Prostate gland (tissue), 2 donors: ENCODE measurements at regions of chr4 and their contacts with region 1.

Region 1: DNA sequence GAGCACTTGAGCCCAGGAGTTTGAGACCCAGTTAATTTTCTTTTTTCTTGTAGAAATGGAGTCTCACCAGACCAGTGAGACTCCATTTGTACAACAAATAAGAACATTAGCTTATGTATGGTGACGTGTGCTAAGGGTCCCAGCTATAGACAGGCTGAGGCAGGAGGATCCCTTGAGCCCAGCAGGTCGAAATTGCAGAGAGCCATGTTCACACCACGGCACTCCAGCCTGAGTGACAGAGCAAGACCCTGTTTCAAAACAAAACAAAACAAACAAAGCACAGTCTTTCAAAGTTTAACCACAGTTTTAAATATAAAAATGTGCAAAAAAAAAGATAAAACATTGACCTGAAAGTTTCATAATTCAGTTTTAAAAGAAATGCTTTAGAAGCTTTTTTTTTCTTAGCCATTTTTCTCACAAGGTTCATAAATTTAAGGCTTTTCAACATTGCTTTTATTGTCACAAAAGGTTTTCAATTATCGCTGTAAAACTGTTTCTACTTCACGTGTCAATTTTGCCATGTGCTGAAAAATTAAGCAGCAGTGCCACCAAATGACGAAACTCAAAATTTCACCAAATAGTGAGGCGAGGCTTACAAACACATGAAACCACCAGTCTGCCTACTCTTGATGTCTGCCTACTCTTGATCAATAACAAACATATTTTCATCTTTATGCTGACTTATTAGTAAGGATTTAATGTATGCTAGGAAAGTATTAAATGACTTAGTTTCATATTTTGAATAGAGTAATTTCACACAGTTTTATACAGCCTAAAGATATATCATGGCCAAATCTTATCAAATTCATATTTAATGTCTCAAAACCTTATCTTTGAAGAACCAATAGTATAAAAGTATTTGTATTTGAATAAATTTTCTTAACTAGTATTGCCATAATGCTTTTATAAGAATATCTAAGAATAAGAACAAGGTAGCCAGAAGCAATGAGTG is 126.3 kb downstream of the NEK1 start:
- DNase-seq: peak; percentile 36
- H3K4me3 ChIP-seq: no peak overlapping the region
- H3K27ac ChIP-seq: no peak overlapping the region
- H3K4me1 ChIP-seq: no peaks in the 10 kb centered on the region
- H3K27me3 ChIP-seq: no peaks in the 10 kb centered on the region
- CTCF ChIP-seq: peak in 3 of 4 experiments; percentile 43 to 71 (median 66)
- POLR2A ChIP-seq: no peak

Region 2: GRCh38 chr4:168514249-168514852 is 971.7 kb before region 1 on chr4:
- intact Hi-C with region 1: loop called (anchors 10 kb)
- DNase-seq: no peak
- H3K4me3 ChIP-seq: no peak overlapping the region
- H3K27ac ChIP-seq: no peak overlapping the region
- H3K4me1 ChIP-seq: no peaks in the 10 kb centered on the region
- H3K27me3 ChIP-seq: no peaks in the 10 kb centered on the region
- CTCF ChIP-seq: peak; percentile 30 to 48 (median 44)
- POLR2A ChIP-seq: no peak

Region 3: DNA sequence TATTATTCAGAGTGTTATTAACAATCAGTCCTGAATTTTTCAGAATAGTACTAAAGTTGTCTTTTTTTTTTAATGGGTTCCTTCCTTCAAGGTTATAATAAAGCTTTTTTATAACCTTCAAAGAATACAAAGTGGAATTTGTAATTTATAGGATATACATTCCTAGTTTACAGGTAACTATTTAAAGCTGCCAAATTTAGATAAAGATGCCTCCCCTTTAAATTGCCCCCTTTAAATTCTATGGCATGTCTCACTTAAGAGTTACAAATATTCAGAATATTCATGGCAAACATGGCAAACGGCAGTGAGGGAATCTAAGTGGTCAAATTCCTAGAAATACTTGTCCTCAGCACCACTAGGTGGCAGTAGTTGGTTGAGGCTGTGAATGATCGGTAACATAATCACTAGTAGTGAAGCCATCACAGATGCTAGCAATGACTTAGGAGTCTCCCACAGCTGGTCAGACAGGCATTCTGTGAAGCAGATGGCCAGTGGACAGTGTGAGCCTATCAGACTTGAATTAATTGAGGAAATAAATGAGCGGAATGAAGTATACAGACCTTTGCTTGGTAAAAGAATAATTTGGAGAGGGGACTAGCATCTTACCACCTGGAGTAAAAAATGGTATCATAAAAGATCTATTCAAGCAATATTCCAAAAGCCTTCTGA is 562.4 kb before region 1 on chr4:
- intact Hi-C with region 1: loop called (anchors 5 kb)
- DNase-seq: peak; percentile 55
- H3K4me3 ChIP-seq: no peak overlapping the region
- H3K27ac ChIP-seq: no peak overlapping the region
- H3K4me1 ChIP-seq: no peaks in the 10 kb centered on the region
- H3K27me3 ChIP-seq: no peaks in the 10 kb centered on the region
- CTCF ChIP-seq: peak; percentile 45 to 80 (median 72)
- POLR2A ChIP-seq: no peak

Region 4: GRCh38 chr4:169024762-169025161 is 461.3 kb before region 1 on chr4:
- intact Hi-C with region 1: loop called (anchors 5 kb)
- DNase-seq: peak; percentile 26
- H3K4me3 ChIP-seq: no peak overlapping the region
- H3K27ac ChIP-seq: no peak overlapping the region
- H3K4me1 ChIP-seq: no peaks in the 10 kb centered on the region
- H3K27me3 ChIP-seq: no peaks in the 10 kb centered on the region
- CTCF ChIP-seq: peak in 3 of 4 experiments; percentile 54 to 72 (median 71)
- POLR2A ChIP-seq: no peak

Region 5: DNA sequence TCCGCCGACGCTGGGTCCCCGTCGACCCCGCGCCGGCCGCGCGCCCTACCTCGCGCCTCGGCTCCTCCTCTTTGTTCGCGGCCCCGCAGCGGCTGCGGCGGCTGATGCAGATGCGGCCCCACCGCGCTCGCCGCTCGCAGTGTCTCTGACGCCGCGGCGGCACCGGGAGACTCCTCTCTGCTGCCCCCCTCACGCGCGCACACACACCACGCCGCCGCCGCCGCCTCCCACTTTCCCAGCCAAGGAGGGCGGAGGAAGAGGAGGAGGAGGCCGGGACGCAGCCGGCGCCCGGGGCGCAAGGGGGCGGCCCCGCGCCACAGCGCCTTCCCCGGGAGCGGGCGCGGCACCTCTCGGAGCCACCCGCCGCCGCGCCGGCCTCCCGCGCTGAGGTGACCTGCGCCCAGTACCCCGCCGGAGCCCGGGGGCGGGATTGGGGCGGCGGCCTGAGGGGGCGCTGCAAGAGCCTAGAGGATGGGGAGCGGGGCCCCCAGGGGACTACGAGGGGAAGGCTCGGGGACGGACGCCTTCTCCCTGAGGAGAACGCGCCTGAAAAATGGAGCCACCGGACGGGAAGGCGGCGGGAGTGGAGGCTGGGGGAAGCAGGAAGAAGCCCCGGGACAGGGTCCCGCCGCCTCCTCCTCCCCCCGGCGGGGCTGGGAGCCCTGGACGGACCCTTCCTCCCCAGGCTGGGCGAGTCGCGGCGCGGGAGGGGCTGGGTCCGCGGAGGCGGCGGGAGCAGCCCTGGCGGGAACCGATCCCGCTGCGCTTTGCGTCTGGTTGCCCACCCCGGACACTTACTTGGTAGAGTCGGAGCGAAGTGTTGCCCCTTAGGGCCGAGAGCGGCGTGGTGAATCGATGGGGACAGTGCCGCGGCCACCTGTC is 215.0 kb before region 1 on chr4 and contains the start of gene SH3RF1:
- intact Hi-C with region 1: loop called (anchors 2 kb)
- DNase-seq: peak; percentile 92
- H3K4me3 ChIP-seq: peak within 1 kb of the TSS; percentile 92 to 97
- H3K27ac ChIP-seq: peak within 1 kb of the TSS; percentile 91 to 95
- H3K4me1 ChIP-seq: no peaks in the 10 kb centered on the region
- H3K27me3 ChIP-seq: no peaks in the 10 kb centered on the region
- CTCF ChIP-seq: peak in 3 of 4 experiments; percentile 24 to 57 (median 49)
- POLR2A ChIP-seq: peak; percentile 91
- total RNA-seq, gene SH3RF1: 42.9 to 57.5 TPM

Region 6: GRCh38 chr4:169417629-169418282 is 68.3 kb before region 1 on chr4:
- intact Hi-C with region 1: no loop called
- DNase-seq: no peak
- H3K4me3 ChIP-seq: no peak overlapping the region
- H3K27ac ChIP-seq: no peak overlapping the region
- H3K4me1 ChIP-seq: no peaks in the 10 kb centered on the region
- H3K27me3 ChIP-seq: no peaks in the 10 kb centered on the region
- CTCF ChIP-seq: no peak
- POLR2A ChIP-seq: no peak